ENCODE measurements at regions of chr5 and their contacts with region 1.

Region 1: GRCh38 chr5:88419931-88420330 is 151.3 kb upstream of the TMEM161B start:
- DNase-seq: no peak
- ATAC-seq: no peak
- H3K4me3 ChIP-seq: no peak overlapping the region
- H3K27ac ChIP-seq: no peak overlapping the region
- H3K4me1 ChIP-seq: no peaks in the 10 kb centered on the region
- H3K27me3 ChIP-seq: no peaks in the 10 kb centered on the region
- CTCF ChIP-seq: no peak

Region 2: GRCh38 chr5:88452820-88453219 is 32.9 kb after region 1 on chr5:
- intact Hi-C with region 1: loop called in 1 of 2 experiments (anchors 2 kb)
- DNase-seq: no peak
- ATAC-seq: no peak
- H3K4me3 ChIP-seq: no peak overlapping the region
- H3K27ac ChIP-seq: no peak overlapping the region
- H3K4me1 ChIP-seq: no peaks in the 10 kb centered on the region
- H3K27me3 ChIP-seq: no peaks in the 10 kb centered on the region
- CTCF ChIP-seq: no peak